Heart left ventricle (tissue), 16 donors: ENCODE measurements at regions of chr12 and their contacts with region 1.

Region 1: DNA sequence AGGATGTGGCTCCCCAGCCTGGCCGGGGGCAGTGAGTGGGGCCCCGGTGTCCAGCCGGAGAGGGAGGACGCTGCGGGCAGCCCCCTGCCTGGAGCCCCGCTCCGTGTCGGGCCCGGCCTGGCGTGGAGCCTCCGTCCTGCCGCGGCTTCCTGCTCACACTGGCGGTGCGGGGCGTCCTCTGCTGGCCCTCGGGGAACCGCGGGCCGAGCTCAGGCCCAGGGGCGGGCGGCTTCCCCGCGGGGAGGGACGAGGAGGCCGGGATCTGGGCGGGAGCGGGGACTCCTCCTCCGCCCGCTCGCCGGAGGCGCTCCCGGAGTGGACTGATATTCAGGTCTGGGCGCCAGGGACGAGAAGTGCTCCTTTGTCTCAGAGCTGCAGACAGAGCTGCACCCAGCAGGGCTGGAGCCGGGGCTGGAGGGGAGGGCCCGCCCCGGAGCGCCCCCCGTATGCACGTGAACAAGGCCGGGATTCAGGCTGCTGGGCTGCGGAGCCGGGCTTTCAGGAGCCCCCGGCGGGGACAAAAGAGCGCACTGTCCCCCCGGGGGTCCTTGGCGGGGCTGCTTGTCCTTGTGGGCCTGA is 2.2 kb downstream of the MMP17 start:
- DNase-seq: peak; percentile 80 to 92 (median 81)
- ATAC-seq: peak; percentile 59 to 91 (median 88)
- H3K4me3 ChIP-seq: peak overlapping the region; percentile 24 to 67 (median 55)
- H3K27ac ChIP-seq: peak overlapping the region in 11 of 12 donors; percentile 15 to 80 (median 50)
- H3K4me1 ChIP-seq: peaks cover 0 to 46% (median 19%) of the 10 kb centered on the region in 12 donors
- H3K27me3 ChIP-seq: peaks cover 6 to 83% (median 46%) of the 10 kb centered on the region in 9 donors
- CTCF ChIP-seq: peak; percentile 38 to 74 (median 62)
- POLR2A ChIP-seq: peak in 1 of 2 donors; percentile 22

Region 2: DNA sequence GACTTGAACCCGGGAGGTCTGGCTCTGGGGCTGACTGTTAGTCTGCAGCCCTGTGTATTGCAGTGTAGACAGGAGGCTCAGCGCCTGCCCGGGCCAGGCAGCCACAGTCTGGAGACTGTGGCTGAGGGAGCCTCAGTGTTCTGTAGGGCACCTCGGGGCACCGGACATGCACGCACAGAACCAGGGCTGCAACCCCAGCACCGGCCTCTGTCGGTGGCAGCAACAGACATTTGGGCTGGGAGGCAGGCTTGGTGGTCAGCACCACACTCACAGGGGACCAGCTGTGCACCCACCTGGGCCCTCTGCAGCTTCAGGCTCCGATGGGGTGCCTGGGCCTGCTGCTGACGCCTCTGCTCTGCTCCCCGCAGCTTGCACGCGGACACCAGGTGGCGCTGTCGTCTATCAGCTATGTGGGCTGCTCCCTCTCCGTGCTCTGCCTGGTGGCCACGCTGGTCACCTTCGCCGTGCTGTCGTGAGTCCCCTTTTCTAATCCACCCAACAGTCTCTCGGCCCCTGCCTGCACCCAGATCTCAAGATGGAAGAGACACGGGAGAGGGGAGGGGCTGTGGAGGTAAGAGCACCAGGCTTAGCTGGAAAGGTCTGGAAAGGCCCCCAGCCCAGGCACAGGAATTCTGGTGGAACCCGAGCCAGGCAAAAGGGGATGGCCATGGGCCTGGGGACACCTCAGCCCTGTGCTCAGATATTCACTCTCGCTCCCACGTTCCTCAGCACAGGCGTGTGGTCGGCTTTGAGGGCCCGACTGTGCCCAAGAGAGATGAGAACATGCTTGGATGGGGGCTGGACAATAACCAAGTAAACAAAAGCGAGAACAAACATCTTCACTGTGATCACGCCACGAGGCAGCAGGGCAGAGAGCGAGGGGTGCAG is 725.7 kb before region 1 on chr12:
- intact Hi-C with region 1: loop called in 4 of 10 experiments (anchors 2 to 10 kb)
- DNase-seq: peak; percentile 82 to 92 (median 87)
- ATAC-seq: peak; percentile 74 to 94 (median 85)
- H3K4me3 ChIP-seq: no peak overlapping the region
- H3K27ac ChIP-seq: peak overlapping the region in 4 of 12 donors; percentile 6 to 34 (median 10)
- H3K4me1 ChIP-seq: peaks cover 0 to 16% (median 8%) of the 10 kb centered on the region in 12 donors
- H3K27me3 ChIP-seq: no peaks in the 10 kb centered on the region
- CTCF ChIP-seq: peak; percentile 86 to 96 (median 92)
- POLR2A ChIP-seq: no peak

Region 3: DNA sequence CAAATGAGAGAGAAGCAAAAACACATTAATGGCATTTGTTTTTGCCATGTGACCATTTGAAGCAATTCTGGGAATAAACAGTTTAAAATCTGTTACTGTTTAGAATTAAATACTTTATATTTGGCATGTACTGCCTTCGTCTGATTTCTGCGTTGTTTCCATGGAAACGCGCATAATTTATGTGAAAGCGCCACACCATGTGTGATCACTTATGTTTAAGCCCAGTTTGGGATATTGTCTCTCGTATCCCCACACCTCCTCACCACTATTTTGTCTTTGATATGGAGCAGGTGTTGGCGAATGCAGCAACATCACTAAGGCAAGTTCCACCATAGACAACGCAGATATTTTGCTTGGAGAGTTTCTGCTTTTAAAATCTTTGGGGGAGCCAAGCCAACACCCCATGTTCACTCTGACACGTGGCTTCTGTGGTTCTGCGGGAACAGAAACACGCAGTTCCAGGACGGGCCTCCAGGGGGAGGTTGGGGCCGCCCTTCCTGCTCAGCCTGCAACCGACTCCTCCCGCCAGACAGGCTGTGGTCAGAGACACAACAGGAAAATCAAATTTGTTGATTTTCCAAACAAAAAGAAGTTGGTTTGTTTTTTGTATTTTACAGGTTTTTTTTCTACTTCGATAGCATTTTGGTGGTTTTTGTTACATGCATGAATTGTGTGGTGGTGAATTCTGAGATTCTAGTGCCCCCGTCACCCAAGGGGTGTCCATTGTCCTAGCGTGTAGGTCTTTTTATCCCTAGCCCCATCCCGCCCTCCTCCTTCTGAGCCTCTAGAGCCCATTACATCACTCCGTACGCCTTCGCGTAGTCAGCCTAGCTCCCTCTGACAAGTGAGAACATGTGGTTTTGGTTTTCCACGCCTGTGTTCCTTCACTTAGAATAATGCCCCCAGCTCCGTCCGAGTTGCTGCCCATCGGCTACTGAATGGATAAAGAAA is 221.4 kb before region 1 on chr12:
- intact Hi-C with region 1: loop called in 3 of 10 experiments (anchors 2 to 10 kb)
- DNase-seq: peak; percentile 67 to 84 (median 71)
- ATAC-seq: peak; percentile 71 to 95 (median 84)
- H3K4me3 ChIP-seq: peak overlapping the region in 3 of 12 donors; percentile 2 to 32 (median 17)
- H3K27ac ChIP-seq: no peak overlapping the region
- H3K4me1 ChIP-seq: peaks cover 0 to 40% (median 0%) of the 10 kb centered on the region in 12 donors
- H3K27me3 ChIP-seq: peaks cover 0 to 6% (median 0%) of the 10 kb centered on the region in 9 donors
- CTCF ChIP-seq: peak; percentile 69 to 94 (median 83)
- POLR2A ChIP-seq: no peak

Region 4: DNA sequence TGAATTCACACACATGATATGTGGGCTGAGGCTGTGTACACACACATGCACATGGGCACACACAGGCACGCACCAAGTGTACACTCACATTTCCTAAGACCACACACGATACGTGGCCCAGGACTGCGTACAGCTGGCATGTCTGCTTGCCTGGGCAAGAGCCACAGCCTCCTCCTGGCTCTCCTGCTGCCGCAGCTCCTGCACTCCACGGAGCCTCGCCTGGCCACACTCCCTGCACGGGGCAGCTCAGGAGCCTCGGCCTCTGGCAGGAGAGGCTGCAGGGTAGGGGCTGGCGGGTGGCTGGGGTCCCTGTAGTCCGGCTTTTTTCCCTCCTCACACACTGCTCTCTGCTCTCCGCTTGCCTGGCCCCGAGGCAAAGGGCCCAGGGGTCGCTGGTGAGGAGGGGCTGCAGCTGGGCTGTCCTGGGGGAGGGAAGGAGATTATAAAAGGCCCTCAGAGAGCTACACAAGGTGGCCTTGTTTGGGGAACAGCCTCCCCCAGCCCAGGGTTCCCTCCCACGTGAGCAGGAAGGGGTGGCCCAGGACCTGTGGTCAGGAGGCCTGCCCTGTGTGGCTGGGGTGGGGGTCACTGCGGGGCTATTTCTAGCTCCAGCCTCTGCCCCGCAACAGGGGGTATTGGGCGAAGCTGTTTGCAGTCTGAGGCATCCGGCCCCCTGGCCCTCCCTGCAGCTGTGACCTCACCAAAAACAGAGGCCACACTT is 208.6 kb before region 1 on chr12:
- intact Hi-C with region 1: loop called in 1 of 10 experiments (anchors 10 kb)
- DNase-seq: peak in 2 of 5 donors; percentile 25 to 32
- ATAC-seq: peak in 2 of 4 donors; percentile 21 to 28
- H3K4me3 ChIP-seq: no peak overlapping the region
- H3K27ac ChIP-seq: no peak overlapping the region
- H3K4me1 ChIP-seq: peaks cover 0 to 15% (median 2%) of the 10 kb centered on the region in 12 donors
- H3K27me3 ChIP-seq: peaks cover 0 to 54% (median 13%) of the 10 kb centered on the region in 9 donors
- CTCF ChIP-seq: no peak
- POLR2A ChIP-seq: no peak

Region 5: GRCh38 chr12:131872185-131873051 is 42.0 kb after region 1 on chr12:
- intact Hi-C with region 1: no loop called
- DNase-seq: no peak
- ATAC-seq: peak in 1 of 4 donors; percentile 29
- H3K4me3 ChIP-seq: no peak overlapping the region
- H3K27ac ChIP-seq: no peak overlapping the region
- H3K4me1 ChIP-seq: peaks cover 0 to 9% (median 0%) of the 10 kb centered on the region in 12 donors
- H3K27me3 ChIP-seq: no peaks in the 10 kb centered on the region
- CTCF ChIP-seq: no peak
- POLR2A ChIP-seq: no peak